Activated B cell treated with CpG ODN at 0.5 μM for 24 hours (primary cell): ENCODE measurements at regions of chr7 and their contacts with region 1.

Region 1: GRCh38 chr7:92633211-92633906 is 43.2 kb upstream of the FAM133B start:
- DNase-seq: no peak
- ATAC-seq: peak; percentile 34
- H3K4me3 Mint-ChIP-seq: peak overlapping the region; percentile 48
- H3K27ac Mint-ChIP-seq: peak overlapping the region; percentile 70
- H3K4me1 Mint-ChIP-seq: peaks cover 46% of the 10 kb centered on the region
- H3K27me3 Mint-ChIP-seq: no peaks in the 10 kb centered on the region
- CTCF ChIP-seq: no peak

Region 2: GRCh38 chr7:92325858-92326257 is 307.5 kb before region 1 on chr7:
- CTCF ChIA-PET with region 1: no interaction called
- POLR2A ChIA-PET with region 1: no interaction called
- intact Hi-C with region 1: no loop called
- DNase-seq: no peak
- ATAC-seq: no peak
- H3K4me3 Mint-ChIP-seq: no peak overlapping the region
- H3K27ac Mint-ChIP-seq: no peak overlapping the region
- H3K4me1 Mint-ChIP-seq: no peaks in the 10 kb centered on the region
- H3K27me3 Mint-ChIP-seq: no peaks in the 10 kb centered on the region
- CTCF ChIP-seq: no peak

Region 3: GRCh38 chr7:92674127-92674778 is 40.9 kb after region 1 on chr7:
- CTCF ChIA-PET with region 1: no interaction called
- POLR2A ChIA-PET with region 1: no interaction called
- intact Hi-C with region 1: loop called (anchors 5 kb)
- DNase-seq: no peak
- ATAC-seq: peak; percentile 34
- H3K4me3 Mint-ChIP-seq: no peak overlapping the region
- H3K27ac Mint-ChIP-seq: peak overlapping the region; percentile 43
- H3K4me1 Mint-ChIP-seq: peaks cover 24% of the 10 kb centered on the region
- H3K27me3 Mint-ChIP-seq: no peaks in the 10 kb centered on the region
- CTCF ChIP-seq: no peak

Region 4: DNA sequence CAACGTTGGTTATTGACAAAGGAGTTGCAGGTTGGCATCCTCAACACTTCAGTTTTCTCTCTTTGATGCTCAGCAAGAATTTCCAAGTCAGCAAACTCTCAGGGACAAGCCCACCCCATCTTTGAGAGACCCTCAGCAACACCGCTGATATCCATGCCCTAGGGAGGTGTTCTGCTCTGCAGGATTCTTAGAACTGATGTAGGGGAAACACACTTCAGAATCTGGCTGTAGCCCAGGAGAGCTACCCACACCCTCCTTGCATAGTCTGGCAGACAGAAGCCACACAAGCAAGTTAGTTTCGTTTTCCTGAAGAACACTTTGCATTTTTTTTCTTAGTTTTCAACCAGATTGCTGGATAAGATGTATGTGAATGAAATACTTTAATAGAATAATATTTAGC is 514.0 kb after region 1 on chr7:
- CTCF ChIA-PET with region 1: no interaction called
- POLR2A ChIA-PET with region 1: no interaction called
- intact Hi-C with region 1: loop called (anchors 5 kb)
- DNase-seq: no peak
- ATAC-seq: peak; percentile 73
- H3K4me3 Mint-ChIP-seq: peak overlapping the region; percentile 90
- H3K27ac Mint-ChIP-seq: peak overlapping the region; percentile 83
- H3K4me1 Mint-ChIP-seq: peaks cover 58% of the 10 kb centered on the region
- H3K27me3 Mint-ChIP-seq: no peaks in the 10 kb centered on the region
- CTCF ChIP-seq: no peak

Region 5: GRCh38 chr7:94008537-94008936 is 1375.2 kb after region 1 on chr7:
- CTCF ChIA-PET with region 1: no interaction called
- POLR2A ChIA-PET with region 1: no interaction called
- intact Hi-C with region 1: no loop called
- DNase-seq: no peak
- ATAC-seq: no peak
- H3K4me3 Mint-ChIP-seq: no peak overlapping the region
- H3K27ac Mint-ChIP-seq: no peak overlapping the region
- H3K4me1 Mint-ChIP-seq: peaks cover 16% of the 10 kb centered on the region
- H3K27me3 Mint-ChIP-seq: peaks cover 4% of the 10 kb centered on the region
- CTCF ChIP-seq: no peak